ENCODE measurements at regions of chr2 and their contacts with region 1.

Region 1: DNA sequence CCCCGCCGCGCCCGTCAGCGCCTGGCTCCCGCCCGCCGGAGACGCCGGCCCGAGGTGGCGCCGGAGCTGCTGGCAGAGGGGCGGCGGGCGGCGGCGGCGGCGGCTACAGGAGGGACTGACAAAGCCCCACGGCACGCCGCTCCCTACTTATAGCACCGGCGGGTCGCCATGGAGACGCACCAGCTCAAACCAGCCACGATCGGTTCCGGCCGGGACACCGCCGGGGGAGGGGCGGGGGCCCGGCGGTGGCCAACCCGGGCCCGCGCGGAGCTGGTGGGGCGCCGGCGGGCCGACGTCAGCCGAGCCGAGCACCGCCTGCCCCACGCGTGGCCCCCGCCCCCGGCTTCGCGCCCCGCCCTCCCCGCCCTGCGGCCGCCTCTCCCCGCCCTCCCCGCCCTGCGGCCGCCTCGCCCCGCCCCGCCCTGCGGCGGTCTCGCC is at the start of gene ODC1:
- DNase-seq: peak; percentile 96
- H3K4me3 Mint-ChIP-seq: peak within 1 kb of the TSS; percentile 81
- H3K27ac Mint-ChIP-seq: peak within 1 kb of the TSS; percentile 87
- H3K4me1 Mint-ChIP-seq: peaks cover 43% of the 10 kb centered on the region
- H3K27me3 Mint-ChIP-seq: no peaks in the 10 kb centered on the region
- CTCF ChIP-seq: no peak
- total RNA-seq, gene ODC1: 78.4 and 85.7 TPM in 2 replicates

Region 2: GRCh38 chr2:10493636-10494281 is 45.5 kb after region 1 on chr2:
- CTCF ChIA-PET with region 1: interaction called, 8 read pairs
- intact Hi-C with region 1: loop called (anchors 1 kb)
- DNase-seq: peak; percentile 95
- H3K4me3 Mint-ChIP-seq: no peak overlapping the region
- H3K27ac Mint-ChIP-seq: peak overlapping the region; percentile 75
- H3K4me1 Mint-ChIP-seq: peaks cover 33% of the 10 kb centered on the region
- H3K27me3 Mint-ChIP-seq: peaks cover 18% of the 10 kb centered on the region
- CTCF ChIP-seq: no peak

Region 3: GRCh38 chr2:10538224-10538894 is 90.1 kb after region 1 on chr2:
- CTCF ChIA-PET with region 1: no interaction called
- intact Hi-C with region 1: loop called (anchors 10 kb)
- DNase-seq: no peak
- H3K4me3 Mint-ChIP-seq: no peak overlapping the region
- H3K27ac Mint-ChIP-seq: no peak overlapping the region
- H3K4me1 Mint-ChIP-seq: peaks cover 22% of the 10 kb centered on the region
- H3K27me3 Mint-ChIP-seq: no peaks in the 10 kb centered on the region
- CTCF ChIP-seq: no peak

Region 4: GRCh38 chr2:10584796-10585475 is 136.7 kb after region 1 on chr2:
- CTCF ChIA-PET with region 1: interaction called, 5 read pairs
- intact Hi-C with region 1: loop called (anchors 1 kb)
- DNase-seq: peak; percentile 79
- H3K4me3 Mint-ChIP-seq: peak overlapping the region; percentile 48
- H3K27ac Mint-ChIP-seq: peak overlapping the region; percentile 97
- H3K4me1 Mint-ChIP-seq: peaks cover 39% of the 10 kb centered on the region
- H3K27me3 Mint-ChIP-seq: no peaks in the 10 kb centered on the region
- CTCF ChIP-seq: no peak

Region 5: DNA sequence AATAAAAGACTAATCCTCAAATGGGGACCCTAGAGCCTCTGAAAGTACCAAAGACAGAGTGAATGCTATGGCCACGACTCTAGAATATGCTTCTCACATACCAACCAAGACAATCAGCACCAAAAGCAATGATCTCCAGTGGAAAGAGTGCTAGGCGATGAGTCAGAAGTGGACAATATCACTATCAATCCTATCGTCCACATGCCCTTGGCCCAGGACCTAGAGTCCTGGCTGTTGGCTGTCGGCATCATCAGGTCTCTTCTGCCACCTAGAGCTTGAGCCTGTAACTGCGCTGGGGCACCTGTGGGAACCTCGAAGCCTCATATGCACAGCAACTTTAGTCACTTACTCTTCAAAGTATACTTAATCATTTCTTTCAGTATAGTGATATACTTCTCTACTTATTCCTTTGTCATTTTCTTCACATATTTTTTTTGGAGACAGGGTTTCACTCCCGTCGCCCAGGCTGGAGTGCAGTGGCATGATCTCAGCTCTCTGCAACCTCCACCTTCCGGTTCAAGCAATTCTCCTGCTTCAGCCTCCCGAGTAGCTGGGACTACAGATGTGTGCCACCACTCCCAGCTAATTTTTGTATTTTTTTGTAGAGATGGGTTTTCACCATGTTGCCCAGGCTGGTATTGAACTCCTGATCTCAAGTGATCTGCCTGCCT is 211.8 kb after region 1 on chr2:
- CTCF ChIA-PET with region 1: interaction called, 9 read pairs
- intact Hi-C with region 1: loop called (anchors 2 kb)
- DNase-seq: peak; percentile 64
- H3K4me3 Mint-ChIP-seq: no peak overlapping the region
- H3K27ac Mint-ChIP-seq: no peak overlapping the region
- H3K4me1 Mint-ChIP-seq: peaks cover 8% of the 10 kb centered on the region
- H3K27me3 Mint-ChIP-seq: no peaks in the 10 kb centered on the region
- CTCF ChIP-seq: peak; percentile 78

Region 6: DNA sequence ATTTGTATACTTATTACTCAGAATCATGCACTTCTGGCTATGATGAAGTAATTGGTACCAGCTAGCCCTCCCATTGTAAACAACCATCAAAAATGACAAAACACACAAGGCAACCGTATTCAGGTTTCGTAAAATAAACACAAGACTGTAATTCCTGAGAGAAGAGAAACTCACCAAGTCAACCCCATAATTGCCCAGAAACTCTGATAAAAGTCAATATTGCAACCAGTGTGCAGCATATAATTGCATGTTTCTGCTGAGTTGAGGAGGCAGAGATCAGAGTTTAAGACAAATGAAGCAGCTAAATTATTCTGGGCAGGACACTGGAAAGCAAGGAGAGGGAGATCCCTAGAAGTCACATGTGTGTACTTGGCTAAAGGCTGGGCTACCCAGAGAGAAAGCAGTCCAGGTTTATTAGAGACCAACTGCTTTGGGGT is 805.9 kb after region 1 on chr2:
- CTCF ChIA-PET with region 1: no interaction called
- intact Hi-C with region 1: no loop called
- DNase-seq: no peak
- H3K4me3 Mint-ChIP-seq: no peak overlapping the region
- H3K27ac Mint-ChIP-seq: no peak overlapping the region
- H3K4me1 Mint-ChIP-seq: peaks cover 15% of the 10 kb centered on the region
- H3K27me3 Mint-ChIP-seq: no peaks in the 10 kb centered on the region
- CTCF ChIP-seq: no peak